IMR-90 (cell line): ENCODE measurements at regions of chr22 and their contacts with region 1.

Region 1: DNA sequence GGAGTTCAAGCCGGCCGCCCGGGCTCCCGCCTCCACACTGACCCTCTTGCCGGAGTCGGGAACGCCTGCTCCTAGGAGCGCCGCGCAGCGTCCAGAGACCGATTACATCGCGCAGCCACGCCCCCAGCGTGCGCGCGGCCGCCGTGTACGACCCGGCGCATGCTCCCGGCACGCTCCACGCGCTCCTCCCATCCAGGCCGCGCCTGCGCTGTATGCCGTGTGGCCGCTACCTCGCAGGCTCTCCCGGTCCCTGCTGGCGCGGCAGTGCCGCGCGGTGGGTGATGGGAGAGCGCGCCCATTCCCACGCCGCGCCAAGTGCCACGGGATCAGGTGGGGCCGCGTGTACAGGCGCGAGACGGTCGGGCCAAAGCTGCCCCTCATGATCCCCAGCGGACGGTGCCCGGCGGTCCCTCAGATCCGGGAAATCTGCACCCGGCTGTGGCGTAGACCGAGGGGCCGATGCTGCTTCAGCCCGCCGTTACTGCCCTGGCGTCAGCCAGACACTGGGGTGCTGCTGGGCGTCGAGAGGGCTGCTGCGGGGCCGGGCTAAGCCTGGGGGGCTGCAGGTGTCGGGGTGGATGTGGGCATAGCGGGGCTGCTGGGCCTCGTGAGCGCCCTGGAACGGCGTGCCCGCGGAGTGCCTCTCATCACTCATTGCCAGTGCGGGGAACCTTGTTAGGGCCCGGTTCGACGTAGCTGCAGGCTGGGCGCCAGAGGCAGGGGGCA is at the starts of genes GNB1L and RTL10:
- DNase-seq: peak; percentile 96
- ATAC-seq: peak; percentile 94
- H3K4me3 ChIP-seq: peak within 1 kb of the TSS; percentile 85
- H3K27ac ChIP-seq: peak within 1 kb of the TSS; percentile 81
- H3K4me1 ChIP-seq: peaks cover 16% of the 10 kb centered on the region
- H3K27me3 ChIP-seq: no peaks in the 10 kb centered on the region
- CTCF ChIP-seq: peak; percentile 27; the same call in 1 of the 2 replicates
- POLR2A ChIP-seq: peak; percentile 84
- RAD21 ChIP-seq: peak; percentile 29
- total RNA-seq, gene GNB1L: 1.7 and 2.5 TPM in 2 replicates
- total RNA-seq, gene RTL10: 8.6 TPM in 2 replicates

Region 2: DNA sequence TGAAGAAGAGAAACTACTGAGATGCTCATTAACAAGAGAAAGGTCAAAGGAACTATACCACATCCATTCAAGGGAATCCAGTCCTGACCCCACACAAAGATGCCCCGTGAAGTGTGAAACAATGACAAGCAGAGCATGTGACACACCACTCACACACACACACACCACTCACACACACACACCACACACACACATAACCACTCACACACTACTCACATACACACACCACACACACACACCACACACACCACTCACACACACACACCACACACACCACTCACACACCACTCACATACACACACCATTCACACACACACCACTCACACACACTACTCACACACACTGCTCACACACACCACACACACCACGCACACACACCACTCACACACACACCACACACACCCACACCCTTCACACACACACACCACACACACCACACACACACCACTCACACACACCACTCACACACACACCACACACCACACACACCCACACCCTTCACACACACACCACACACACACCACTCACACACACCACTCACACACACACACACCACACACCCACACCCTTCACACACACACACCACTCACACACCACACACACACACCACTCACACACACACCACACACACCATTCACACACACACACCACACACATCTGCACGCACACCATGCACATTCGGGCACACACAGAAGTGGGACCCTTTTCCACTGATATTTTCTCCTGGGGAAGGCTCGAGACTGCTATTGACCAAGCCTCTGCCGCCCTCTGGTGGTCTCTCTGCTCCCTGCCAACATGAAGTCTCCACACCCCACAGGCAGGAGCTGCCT is 54.6 kb after region 1 on chr22:
- CTCF ChIA-PET with region 1: interaction called, 3 read pairs
- POLR2A ChIA-PET with region 1: no interaction called
- dilution Hi-C with region 1: no loop called
- in situ Hi-C with region 1: no loop called
- intact Hi-C with region 1: loop called (anchors 1 kb)
- DNase-seq: peak; percentile 73
- ATAC-seq: peak; percentile 99
- H3K4me3 ChIP-seq: no peak overlapping the region
- H3K27ac ChIP-seq: no peak overlapping the region
- H3K4me1 ChIP-seq: peaks cover 8% of the 10 kb centered on the region
- H3K27me3 ChIP-seq: no peaks in the 10 kb centered on the region
- CTCF ChIP-seq: peak; percentile 94
- POLR2A ChIP-seq: peak; percentile 39; the same call in 1 of the 2 replicates
- RAD21 ChIP-seq: peak; percentile 99